Heart right ventricle (tissue), 16 donors: ENCODE measurements at regions of chr13 and their contacts with region 1.

Region 1: GRCh38 chr13:56317841-56318240 is 822.9 kb upstream of the PRR20A start:
- DNase-seq: no peak
- ATAC-seq: no peak
- H3K4me3 ChIP-seq: no peak overlapping the region
- H3K27ac ChIP-seq: no peak overlapping the region
- H3K4me1 ChIP-seq: no peaks in the 10 kb centered on the region
- H3K27me3 ChIP-seq: no peaks in the 10 kb centered on the region
- CTCF ChIP-seq: no peak

Region 2: DNA sequence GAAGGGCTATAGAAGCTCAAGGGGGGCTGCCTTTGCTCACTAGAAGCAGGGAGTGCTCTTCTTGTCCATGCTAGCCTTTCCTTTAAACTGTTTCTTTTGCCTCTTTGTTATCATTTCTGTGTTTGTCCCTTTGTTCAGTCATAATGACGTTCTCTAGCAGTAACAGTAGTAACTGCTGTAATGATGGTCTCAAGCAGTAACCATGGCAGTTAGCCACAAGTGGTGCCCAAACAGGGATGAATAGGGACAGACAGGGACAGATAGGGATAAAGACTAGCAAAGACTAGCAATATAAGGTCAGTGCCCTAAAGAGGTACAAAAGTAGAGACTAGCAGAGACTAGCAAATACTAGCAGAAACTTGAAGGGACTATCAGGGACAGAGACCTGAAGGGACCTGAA is 46.2 kb before region 1 on chr13:
- intact Hi-C with region 1: loop called in 1 of 10 experiments (anchors 10 kb)
- DNase-seq: no peak
- ATAC-seq: no peak
- H3K4me3 ChIP-seq: no peak overlapping the region
- H3K27ac ChIP-seq: no peak overlapping the region
- H3K4me1 ChIP-seq: no peaks in the 10 kb centered on the region
- H3K27me3 ChIP-seq: no peaks in the 10 kb centered on the region
- CTCF ChIP-seq: no peak